ENCODE measurements at regions of chr16 and their contacts with region 1.

Region 1: GRCh38 chr16:129075-129474 is 9.4 kb downstream of the NPRL3 start:
- DNase-seq: no peak
- H3K4me3 ChIP-seq: no peak overlapping the region
- H3K27ac ChIP-seq: no peak overlapping the region
- H3K4me1 ChIP-seq: peaks cover 0 to 5% (median 1%) of the 10 kb centered on the region in 4 experiments
- H3K27me3 ChIP-seq: no peaks in the 10 kb centered on the region

Region 2: DNA sequence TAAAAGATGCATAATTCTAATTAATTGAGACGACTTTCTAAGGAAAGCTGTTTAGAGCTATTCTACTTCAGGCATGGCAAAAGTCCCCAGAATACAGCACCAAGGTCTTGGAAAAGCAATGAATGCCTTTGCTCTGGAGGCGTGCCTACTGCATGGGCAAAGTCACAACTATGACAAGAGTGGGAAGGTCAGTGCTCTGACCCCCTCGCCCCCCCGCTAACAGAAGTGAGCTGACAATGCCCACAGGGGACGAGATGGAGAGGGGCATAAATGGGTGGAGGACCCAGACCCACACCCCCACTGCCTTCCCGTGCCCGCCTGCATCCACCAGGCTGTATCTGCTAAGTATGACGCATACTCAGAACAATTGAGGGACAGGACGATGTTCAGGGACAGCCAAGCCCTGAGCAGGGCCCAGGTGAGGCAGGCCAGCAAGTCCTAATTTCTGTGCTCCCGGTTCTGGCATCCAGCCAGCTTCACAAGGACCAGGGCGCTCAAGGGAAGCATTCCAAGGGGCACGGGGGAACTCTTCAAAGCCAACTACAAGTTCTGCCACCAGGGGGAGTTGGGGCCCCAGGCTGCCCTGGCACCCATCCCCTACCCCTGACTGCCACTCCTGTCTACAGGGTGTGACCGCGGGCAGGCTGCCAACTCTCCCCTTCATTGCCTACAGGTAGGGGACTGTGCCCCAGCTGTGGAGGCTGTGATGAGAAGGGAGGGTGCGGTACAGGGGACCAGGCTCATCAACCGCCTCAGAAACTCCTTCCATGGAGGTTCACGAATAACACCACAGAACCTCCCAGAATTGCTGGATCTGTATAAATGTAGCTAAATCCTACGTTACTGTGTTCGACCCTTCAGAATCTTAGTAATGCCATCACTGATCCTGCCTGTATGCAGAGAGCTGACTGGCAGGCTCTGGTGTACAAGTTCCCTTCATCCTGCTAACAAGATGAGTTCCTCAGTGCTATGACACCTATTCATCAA is 11.4 kb before region 1 on chr16:
- CTCF ChIA-PET with region 1: interaction called, 34 read pairs
- POLR2A ChIA-PET with region 1: no interaction called
- DNase-seq: peak; percentile 72 to 77 (median 73)
- H3K4me3 ChIP-seq: no peak overlapping the region
- H3K27ac ChIP-seq: no peak overlapping the region
- H3K4me1 ChIP-seq: peaks cover 0 to 16% (median 12%) of the 10 kb centered on the region in 4 experiments
- H3K27me3 ChIP-seq: no peaks in the 10 kb centered on the region

Region 3: DNA sequence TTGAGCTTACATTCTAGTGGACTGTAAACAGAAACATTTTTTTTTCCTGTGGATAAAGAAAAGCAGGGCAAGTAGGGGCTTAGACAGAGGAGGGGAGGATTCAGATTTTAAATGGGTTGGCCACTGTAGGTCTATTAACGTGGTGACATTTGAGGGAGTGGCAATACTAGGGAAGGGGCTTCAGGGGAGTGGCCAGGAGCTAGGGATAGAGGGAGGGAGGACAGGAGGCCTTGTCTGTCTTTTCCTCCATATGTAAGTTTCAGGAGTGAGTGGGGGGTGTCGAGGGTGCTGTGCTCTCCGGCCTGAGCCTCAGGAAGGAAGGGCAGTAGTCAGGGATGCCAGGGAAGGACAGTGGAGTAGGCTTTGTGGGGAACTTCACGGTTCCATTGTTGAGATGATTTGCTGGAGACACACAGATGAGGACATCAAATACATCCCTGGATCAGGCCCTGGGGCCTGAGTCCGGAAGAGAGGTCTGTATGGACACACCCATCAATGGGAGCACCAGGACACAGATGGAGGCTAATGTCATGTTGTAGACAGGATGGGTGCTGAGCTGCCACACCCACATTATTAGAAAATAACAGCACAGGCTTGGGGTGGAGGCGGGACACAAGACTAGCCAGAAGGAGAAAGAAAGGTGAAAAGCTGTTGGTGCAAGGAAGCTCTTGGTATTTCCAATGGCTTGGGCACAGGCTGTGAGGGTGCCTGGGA is 30.2 kb after region 1 on chr16:
- CTCF ChIA-PET with region 1: no interaction called
- POLR2A ChIA-PET with region 1: no interaction called
- DNase-seq: no peak
- H3K4me3 ChIP-seq: no peak overlapping the region
- H3K27ac ChIP-seq: no peak overlapping the region
- H3K4me1 ChIP-seq: peaks cover 0 to 9% (median 8%) of the 10 kb centered on the region in 4 experiments
- H3K27me3 ChIP-seq: peaks cover 2 to 67% (median 19%) of the 10 kb centered on the region in 5 experiments

Region 4: DNA sequence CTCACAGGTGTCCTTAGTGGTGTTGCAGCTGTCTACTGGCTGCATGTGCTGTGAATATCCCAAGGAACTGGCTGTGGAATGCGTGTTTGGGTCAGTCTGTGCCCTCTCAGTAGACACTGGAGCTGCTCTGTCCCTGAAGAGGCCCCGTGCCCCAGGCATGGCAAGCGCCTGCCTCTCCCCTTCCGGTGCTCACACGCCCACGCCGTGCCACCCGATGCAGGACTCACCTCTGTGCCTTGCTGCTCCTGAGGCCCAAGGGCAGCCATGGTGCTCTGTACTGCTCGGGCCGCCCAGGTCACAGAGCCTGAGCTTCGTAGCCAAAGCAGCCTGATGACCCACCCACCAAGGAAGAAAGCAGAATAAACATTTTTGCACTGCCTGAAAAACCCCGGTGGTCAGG is 136.6 kb after region 1 on chr16:
- CTCF ChIA-PET with region 1: no interaction called
- POLR2A ChIA-PET with region 1: no interaction called
- DNase-seq: no peak
- H3K4me3 ChIP-seq: no peak overlapping the region
- H3K27ac ChIP-seq: no peak overlapping the region
- H3K4me1 ChIP-seq: no peaks in the 10 kb centered on the region
- H3K27me3 ChIP-seq: no peaks in the 10 kb centered on the region

Measured in common myeloid progenitor, CD34-positive (primary cell).